B cell (primary cell): ENCODE measurements at regions of chr1 and their contacts with region 1.

Region 1: GRCh38 chr1:203273206-203273868 is 32.0 kb upstream of the BTG2 start:
- DNase-seq: peak; percentile 95
- ATAC-seq: peak; percentile 78
- H3K4me3 ChIP-seq: peak overlapping the region; percentile 45 to 83 (median 61)
- H3K4me3 Mint-ChIP-seq: peak overlapping the region; percentile 86
- H3K27ac ChIP-seq: peak overlapping the region; percentile 62 to 84
- H3K27ac Mint-ChIP-seq: peak overlapping the region; percentile 86
- H3K4me1 ChIP-seq: peaks cover 72 to 77% of the 10 kb centered on the region in 2 donors
- H3K4me1 Mint-ChIP-seq: peaks cover 67% of the 10 kb centered on the region
- H3K27me3 ChIP-seq: no peaks in the 10 kb centered on the region
- H3K27me3 Mint-ChIP-seq: no peaks in the 10 kb centered on the region
- CTCF ChIP-seq: peak; percentile 99

Region 2: DNA sequence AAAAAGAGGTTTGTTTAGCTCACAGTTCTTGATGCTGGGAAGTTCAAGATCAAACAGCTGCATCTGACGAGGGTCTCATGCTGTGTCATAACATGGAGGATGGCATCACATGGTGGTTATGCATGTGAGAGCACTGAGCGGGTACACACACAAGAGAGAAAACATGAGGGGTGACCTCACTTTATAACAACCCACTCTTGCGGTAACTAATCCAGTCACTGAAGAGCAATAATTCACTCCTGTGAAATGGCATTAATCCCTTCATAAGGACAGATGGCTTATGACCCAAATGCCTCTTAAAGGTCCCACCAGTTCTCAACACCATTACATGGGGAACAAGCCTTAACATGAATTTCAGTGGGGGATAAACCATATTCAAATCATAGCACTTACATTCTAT is 20.7 kb before region 1 on chr1:
- CTCF ChIA-PET with region 1: no interaction called
- POLR2A ChIA-PET with region 1: no interaction called
- intact Hi-C with region 1: no loop called
- DNase-seq: no peak
- ATAC-seq: no peak
- H3K4me3 ChIP-seq: no peak overlapping the region
- H3K4me3 Mint-ChIP-seq: no peak overlapping the region
- H3K27ac ChIP-seq: no peak overlapping the region
- H3K27ac Mint-ChIP-seq: no peak overlapping the region
- H3K4me1 ChIP-seq: no peaks in the 10 kb centered on the region
- H3K4me1 Mint-ChIP-seq: no peaks in the 10 kb centered on the region
- H3K27me3 ChIP-seq: peaks cover 0 to 4% (median 0%) of the 10 kb centered on the region in 4 experiments
- H3K27me3 Mint-ChIP-seq: peaks cover 31% of the 10 kb centered on the region
- CTCF ChIP-seq: no peak

Region 3: DNA sequence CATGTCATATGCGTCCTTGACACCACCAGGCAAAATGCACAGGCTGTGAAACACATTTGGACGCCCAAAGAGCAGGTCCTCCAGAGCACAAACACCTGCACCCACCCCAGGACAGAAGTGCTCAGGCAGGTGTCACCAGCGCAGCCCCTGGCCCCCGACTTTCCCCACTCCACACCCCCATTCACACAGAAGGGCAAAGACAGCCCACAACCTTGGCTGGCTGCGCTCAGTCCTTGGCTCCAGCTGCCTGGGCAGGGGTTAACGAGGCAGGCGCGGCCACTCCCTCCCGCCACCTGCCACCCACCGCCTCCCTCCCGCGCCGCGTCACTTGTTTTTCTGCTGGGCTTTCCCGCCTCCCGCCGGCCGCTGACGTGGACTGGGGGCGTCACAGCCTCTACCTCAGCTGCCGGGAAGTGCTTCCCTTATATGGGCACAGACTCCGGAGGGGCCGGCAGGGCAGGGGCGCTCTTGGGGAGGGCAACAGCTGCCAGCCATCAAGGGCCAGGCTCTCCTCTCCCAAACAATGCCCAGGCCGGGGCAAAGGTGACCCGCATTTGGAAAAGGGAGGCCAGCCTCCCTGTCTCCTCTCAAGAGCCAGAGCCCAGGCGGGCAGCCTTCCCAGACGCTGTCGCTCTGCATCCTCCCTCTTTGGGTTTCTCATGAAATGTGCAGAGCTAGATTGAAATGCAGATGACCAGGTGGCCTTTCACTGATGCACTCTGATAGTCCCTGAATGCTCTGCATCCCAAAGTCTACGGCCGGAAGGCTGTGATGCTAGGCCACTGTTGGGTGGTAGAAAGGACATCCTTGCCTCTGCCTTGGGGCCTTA is 17.1 kb after region 1 on chr1:
- CTCF ChIA-PET with region 1: interaction called, 159 read pairs
- POLR2A ChIA-PET with region 1: interaction called, 268 read pairs
- intact Hi-C with region 1: loop called (anchors 1 kb)
- DNase-seq: peak; percentile 98
- ATAC-seq: peak; percentile 40
- H3K4me3 ChIP-seq: peak overlapping the region; percentile 45 to 66 (median 56)
- H3K4me3 Mint-ChIP-seq: peak overlapping the region; percentile 88
- H3K27ac ChIP-seq: peak overlapping the region; percentile 99 to 100
- H3K27ac Mint-ChIP-seq: peak overlapping the region; percentile 95
- H3K4me1 ChIP-seq: peaks cover 70 to 90% of the 10 kb centered on the region in 2 donors
- H3K4me1 Mint-ChIP-seq: peaks cover 87% of the 10 kb centered on the region
- H3K27me3 ChIP-seq: no peaks in the 10 kb centered on the region
- H3K27me3 Mint-ChIP-seq: no peaks in the 10 kb centered on the region
- CTCF ChIP-seq: no peak

Region 4: GRCh38 chr1:203304919-203305808 is 31.8 kb after region 1 on chr1 and contains the start of gene BTG2:
- CTCF ChIA-PET with region 1: interaction called, 441 read pairs
- POLR2A ChIA-PET with region 1: interaction called, 307 read pairs
- intact Hi-C with region 1: loop called (anchors 1 kb)
- DNase-seq: peak; percentile 96
- ATAC-seq: peak; percentile 80
- H3K4me3 ChIP-seq: peak within 1 kb of the TSS; percentile 96 to 99 (median 99)
- H3K4me3 Mint-ChIP-seq: peak within 1 kb of the TSS; percentile 99
- H3K27ac ChIP-seq: peak within 1 kb of the TSS; percentile 100
- H3K27ac Mint-ChIP-seq: peak within 1 kb of the TSS; percentile 99
- H3K4me1 ChIP-seq: peaks cover 65 to 78% of the 10 kb centered on the region in 2 donors
- H3K4me1 Mint-ChIP-seq: peaks cover 70% of the 10 kb centered on the region
- H3K27me3 ChIP-seq: no peaks in the 10 kb centered on the region
- H3K27me3 Mint-ChIP-seq: no peaks in the 10 kb centered on the region
- CTCF ChIP-seq: no peak
- total RNA-seq, gene BTG2: 505 and 508 TPM in 2 replicates

Region 5: GRCh38 chr1:203381151-203381751 is 107.9 kb after region 1 on chr1:
- CTCF ChIA-PET with region 1: interaction called, 31 read pairs
- POLR2A ChIA-PET with region 1: no interaction called
- intact Hi-C with region 1: loop called (anchors 2 kb)
- DNase-seq: peak; percentile 82
- ATAC-seq: peak; percentile 89
- H3K4me3 ChIP-seq: peak overlapping the region in 2 of 5 experiments; percentile 34 to 49
- H3K4me3 Mint-ChIP-seq: peak overlapping the region; percentile 72
- H3K27ac ChIP-seq: peak overlapping the region; percentile 73 to 82
- H3K27ac Mint-ChIP-seq: peak overlapping the region; percentile 76
- H3K4me1 ChIP-seq: peaks cover 38 to 45% of the 10 kb centered on the region in 2 donors
- H3K4me1 Mint-ChIP-seq: peaks cover 45% of the 10 kb centered on the region
- H3K27me3 ChIP-seq: no peaks in the 10 kb centered on the region
- H3K27me3 Mint-ChIP-seq: no peaks in the 10 kb centered on the region
- CTCF ChIP-seq: no peak

Region 6: DNA sequence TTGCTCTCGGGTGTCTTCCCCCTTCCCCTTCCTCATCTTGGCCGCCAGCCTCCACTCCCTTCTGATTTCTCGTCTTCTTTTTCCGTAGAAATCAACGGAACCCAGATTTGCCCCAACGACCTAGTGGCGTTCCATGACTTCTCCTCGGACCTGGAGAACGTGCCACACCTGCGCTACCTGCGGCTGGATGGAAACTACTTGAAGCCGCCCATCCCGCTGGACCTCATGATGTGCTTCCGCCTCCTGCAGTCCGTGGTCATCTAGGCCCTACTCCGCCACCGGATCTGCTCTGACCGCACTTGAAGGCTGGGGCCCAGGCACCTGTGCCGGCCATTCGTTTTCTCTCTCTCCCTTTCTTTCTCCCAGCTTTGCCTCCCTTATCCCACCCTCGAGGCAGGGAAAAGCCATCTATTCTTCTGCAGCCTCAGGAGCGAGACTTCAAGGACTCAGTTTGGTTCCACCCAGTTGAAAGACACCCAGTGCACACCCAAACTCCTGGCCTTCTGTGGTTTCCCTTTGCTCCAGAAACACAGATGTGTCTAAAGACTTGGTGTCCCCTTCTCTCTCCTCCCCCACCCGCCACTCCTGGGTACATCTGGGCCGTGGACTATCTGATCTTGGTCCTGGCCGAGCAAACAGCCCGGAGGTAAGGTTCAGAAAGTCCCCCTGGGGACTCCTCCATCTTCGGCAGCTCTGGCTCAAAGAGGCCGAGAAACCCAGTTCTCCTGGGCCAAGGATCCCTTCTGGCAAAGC is 213.5 kb after region 1 on chr1:
- CTCF ChIA-PET with region 1: interaction called, 315 read pairs
- POLR2A ChIA-PET with region 1: interaction called, 5 read pairs
- intact Hi-C with region 1: no loop called
- DNase-seq: no peak
- ATAC-seq: no peak
- H3K4me3 ChIP-seq: no peak overlapping the region
- H3K4me3 Mint-ChIP-seq: peak overlapping the region; percentile 90
- H3K27ac ChIP-seq: no peak overlapping the region
- H3K27ac Mint-ChIP-seq: peak overlapping the region; percentile 53
- H3K4me1 ChIP-seq: peaks cover 0 to 10% of the 10 kb centered on the region in 2 donors
- H3K4me1 Mint-ChIP-seq: peaks cover 9% of the 10 kb centered on the region
- H3K27me3 ChIP-seq: peaks cover 0 to 2% (median 0%) of the 10 kb centered on the region in 4 experiments
- H3K27me3 Mint-ChIP-seq: peaks cover 8% of the 10 kb centered on the region
- CTCF ChIP-seq: no peak